ENCODE measurements at regions of chr18 and their contacts with region 1.

Region 1: GRCh38 chr18:62584241-62585120 is 61.7 kb downstream of the ZCCHC2 start:
- DNase-seq: peak; percentile 89 to 91
- ATAC-seq: peak; percentile 92
- H3K4me3 ChIP-seq: no peak overlapping the region
- H3K27ac ChIP-seq: no peak overlapping the region
- H3K4me1 ChIP-seq: no peaks in the 10 kb centered on the region
- H3K27me3 ChIP-seq: no peaks in the 10 kb centered on the region

Region 2: GRCh38 chr18:62186774-62187542 is 397.5 kb before region 1 on chr18 and contains the starts of genes PIGN and RELCH:
- intact Hi-C with region 1: loop called (anchors 5 to 10 kb)
- DNase-seq: peak; percentile 96 to 97
- ATAC-seq: peak; percentile 99
- H3K4me3 ChIP-seq: peak within 1 kb of the TSS; percentile 62 to 85
- H3K27ac ChIP-seq: peak within 1 kb of the TSS in 1 of 2 donors; percentile 72
- H3K4me1 ChIP-seq: no peaks in the 10 kb centered on the region
- H3K27me3 ChIP-seq: no peaks in the 10 kb centered on the region
- total RNA-seq, gene PIGN: 25.0 to 32.2 TPM
- total RNA-seq, gene RELCH: 31.6 to 40.7 TPM

Region 3: DNA sequence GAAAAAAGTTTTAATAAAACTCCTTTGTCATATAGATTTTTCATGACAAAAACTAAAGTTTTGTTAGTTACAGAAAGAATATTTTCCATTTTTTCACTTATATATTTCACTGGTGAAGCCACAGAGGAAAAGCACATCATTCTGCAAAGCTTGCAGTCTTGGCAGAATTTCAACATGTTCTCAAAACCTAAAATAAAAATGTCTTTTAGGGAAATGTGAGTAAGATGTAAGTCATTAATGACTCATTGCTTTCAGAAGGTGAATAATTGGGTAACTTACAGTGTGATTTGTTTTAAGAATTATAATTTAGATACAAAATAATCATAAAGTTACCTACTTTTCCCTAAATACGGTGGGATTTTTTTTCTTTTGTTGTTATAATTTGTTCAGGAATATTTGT is 302.8 kb before region 1 on chr18:
- intact Hi-C with region 1: loop called in 1 of 2 experiments (anchors 10 kb)
- DNase-seq: no peak
- ATAC-seq: no peak
- H3K4me3 ChIP-seq: no peak overlapping the region
- H3K27ac ChIP-seq: no peak overlapping the region
- H3K4me1 ChIP-seq: peaks cover 0 to 8% of the 10 kb centered on the region in 2 donors
- H3K27me3 ChIP-seq: no peaks in the 10 kb centered on the region

Region 4: DNA sequence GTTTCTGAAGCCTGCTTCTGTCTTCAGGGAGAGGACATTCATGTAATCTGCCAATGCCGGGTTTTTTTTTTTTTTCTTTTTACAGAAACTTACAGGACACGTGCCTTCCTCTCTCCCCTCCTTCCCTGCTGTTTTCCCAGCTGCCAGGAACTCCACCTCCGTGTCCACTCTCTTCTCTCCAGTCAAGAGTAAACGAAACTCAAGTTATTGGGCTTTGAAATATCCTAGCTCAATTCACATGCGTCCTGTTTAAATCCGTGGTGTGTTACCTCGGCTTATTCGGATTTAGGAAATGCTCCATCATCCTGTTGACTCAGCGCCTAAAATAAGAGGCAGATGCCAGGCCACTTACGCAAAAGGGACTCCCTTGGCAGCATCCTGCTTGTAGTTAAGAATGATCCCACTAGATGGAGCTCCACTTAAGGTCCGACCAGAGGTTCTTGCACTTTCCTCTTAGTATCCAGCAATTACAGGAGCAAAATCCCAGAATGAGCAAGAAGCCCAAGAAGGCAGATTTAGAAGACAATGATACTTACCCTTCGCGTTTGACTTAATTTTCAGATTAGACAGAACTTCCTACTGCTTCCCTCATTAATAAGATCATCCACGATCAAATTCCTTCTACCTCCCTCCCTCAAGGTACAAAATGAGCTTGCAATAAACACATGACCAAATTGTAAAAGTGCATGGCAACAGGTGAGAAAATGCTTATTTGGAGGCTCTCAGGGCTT is 158.9 kb before region 1 on chr18:
- intact Hi-C with region 1: loop called (anchors 5 kb)
- DNase-seq: peak in 1 of 2 donors; percentile 75
- ATAC-seq: peak; percentile 97
- H3K4me3 ChIP-seq: peak overlapping the region; percentile 25 to 36
- H3K27ac ChIP-seq: peak overlapping the region in 1 of 2 donors; percentile 83
- H3K4me1 ChIP-seq: peaks cover 0 to under 1% of the 10 kb centered on the region in 2 donors
- H3K27me3 ChIP-seq: no peaks in the 10 kb centered on the region

Region 5: GRCh38 chr18:62529597-62529996 is 54.9 kb before region 1 on chr18:
- intact Hi-C with region 1: loop called in 1 of 2 experiments (anchors 2 kb)
- DNase-seq: no peak
- ATAC-seq: no peak
- H3K4me3 ChIP-seq: no peak overlapping the region
- H3K27ac ChIP-seq: no peak overlapping the region
- H3K4me1 ChIP-seq: peaks cover 0 to 3% of the 10 kb centered on the region in 2 donors
- H3K27me3 ChIP-seq: no peaks in the 10 kb centered on the region

Region 6: DNA sequence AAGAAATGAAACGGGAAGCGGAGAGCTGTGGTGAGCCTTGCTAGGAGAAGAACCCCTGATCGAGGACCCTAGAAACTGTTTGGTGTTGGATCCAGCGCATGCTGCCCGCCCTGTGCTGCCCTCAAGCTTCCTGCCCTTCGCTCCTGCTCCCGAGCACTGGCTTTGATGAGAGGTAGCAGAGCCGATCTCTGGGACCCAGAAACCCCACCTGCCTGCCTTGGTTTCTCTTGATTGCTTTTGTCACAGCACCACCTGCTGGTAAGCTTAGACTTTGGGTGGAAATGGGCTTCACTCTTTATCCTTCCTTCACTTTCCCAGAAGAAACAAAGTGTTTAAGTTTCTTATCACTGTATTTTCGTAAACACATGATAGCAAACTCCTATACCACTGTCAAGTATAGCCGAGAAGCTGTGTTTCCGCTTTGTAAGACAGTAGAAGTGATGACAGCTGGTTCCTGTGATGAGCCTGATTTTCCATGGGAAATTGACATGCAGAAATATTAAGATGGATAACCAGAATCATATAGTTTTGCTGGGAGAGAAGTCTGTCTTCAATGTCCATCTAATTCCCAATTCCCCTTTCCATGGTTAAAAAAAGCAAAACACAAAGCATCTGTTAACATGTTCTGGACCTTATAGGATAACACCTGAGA is 398.2 kb after region 1 on chr18:
- intact Hi-C with region 1: loop called (anchors 1 to 2 kb)
- DNase-seq: peak in 1 of 2 donors; percentile 68
- ATAC-seq: peak; percentile 71
- H3K4me3 ChIP-seq: peak overlapping the region in 1 of 2 donors; percentile 34
- H3K27ac ChIP-seq: no peak overlapping the region
- H3K4me1 ChIP-seq: no peaks in the 10 kb centered on the region
- H3K27me3 ChIP-seq: no peaks in the 10 kb centered on the region